ENCODE measurements at regions of chr10 and their contacts with region 1.

Region 1: GRCh38 chr10:121974535-121975294 is at the start of gene NSMCE4A:
- DNase-seq: peak; percentile 62 to 84
- H3K4me3 ChIP-seq: peak within 1 kb of the TSS; percentile 74 to 99
- H3K27ac ChIP-seq: peak within 1 kb of the TSS; percentile 93 to 99
- H3K4me1 ChIP-seq: peaks cover 0 to 24% (median 17%) of the 10 kb centered on the region in 4 donors
- H3K27me3 ChIP-seq: no peaks in the 10 kb centered on the region
- CTCF ChIP-seq: peak in 1 of 2 experiments; percentile 55

Region 2: DNA sequence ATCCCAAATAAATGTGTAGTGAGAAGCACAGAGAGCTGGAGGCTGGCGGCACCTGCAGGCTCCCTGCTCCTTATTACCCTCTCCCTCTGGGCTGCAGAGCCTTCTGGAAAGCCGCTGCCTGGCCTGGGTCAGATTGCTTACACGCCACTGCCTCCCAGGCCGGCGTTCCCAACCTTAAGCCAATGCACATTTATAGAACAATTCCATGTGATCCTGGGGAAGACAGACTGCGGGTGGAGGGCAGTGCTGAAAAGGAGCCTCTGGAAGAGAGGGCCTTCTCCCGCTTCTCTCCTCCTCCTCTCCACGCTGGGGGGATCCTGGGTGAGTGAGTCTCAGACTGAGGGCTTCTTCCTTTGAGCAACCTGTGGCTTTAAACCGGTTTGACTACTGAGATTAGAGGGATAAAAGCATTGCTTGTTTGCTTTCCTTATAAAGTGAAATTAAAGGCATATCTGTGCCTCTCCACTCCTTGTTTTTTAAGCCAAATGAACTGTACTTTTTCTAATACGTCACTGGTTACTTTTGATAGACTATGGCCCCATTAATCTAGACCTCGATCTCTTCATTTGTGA is 19.8 kb after region 1 on chr10:
- intact Hi-C with region 1: loop called (anchors 1 kb)
- DNase-seq: peak; percentile 74 to 89
- H3K4me3 ChIP-seq: peak overlapping the region; percentile 28 to 42
- H3K27ac ChIP-seq: peak overlapping the region; percentile 86 to 87
- H3K4me1 ChIP-seq: peaks cover 0 to 56% (median 31%) of the 10 kb centered on the region in 4 donors
- H3K27me3 ChIP-seq: no peaks in the 10 kb centered on the region
- CTCF ChIP-seq: peak in 1 of 2 experiments; percentile 20

Region 3: GRCh38 chr10:122051251-122051996 is 76.7 kb after region 1 on chr10:
- intact Hi-C with region 1: loop called (anchors 2 kb)
- DNase-seq: peak; percentile 60 to 83
- H3K4me3 ChIP-seq: no peak overlapping the region
- H3K27ac ChIP-seq: peak overlapping the region; percentile 45 to 49
- H3K4me1 ChIP-seq: peaks cover 0 to 20% (median 8%) of the 10 kb centered on the region in 4 donors
- H3K27me3 ChIP-seq: no peaks in the 10 kb centered on the region
- CTCF ChIP-seq: peak; percentile 58 to 72

Region 4: DNA sequence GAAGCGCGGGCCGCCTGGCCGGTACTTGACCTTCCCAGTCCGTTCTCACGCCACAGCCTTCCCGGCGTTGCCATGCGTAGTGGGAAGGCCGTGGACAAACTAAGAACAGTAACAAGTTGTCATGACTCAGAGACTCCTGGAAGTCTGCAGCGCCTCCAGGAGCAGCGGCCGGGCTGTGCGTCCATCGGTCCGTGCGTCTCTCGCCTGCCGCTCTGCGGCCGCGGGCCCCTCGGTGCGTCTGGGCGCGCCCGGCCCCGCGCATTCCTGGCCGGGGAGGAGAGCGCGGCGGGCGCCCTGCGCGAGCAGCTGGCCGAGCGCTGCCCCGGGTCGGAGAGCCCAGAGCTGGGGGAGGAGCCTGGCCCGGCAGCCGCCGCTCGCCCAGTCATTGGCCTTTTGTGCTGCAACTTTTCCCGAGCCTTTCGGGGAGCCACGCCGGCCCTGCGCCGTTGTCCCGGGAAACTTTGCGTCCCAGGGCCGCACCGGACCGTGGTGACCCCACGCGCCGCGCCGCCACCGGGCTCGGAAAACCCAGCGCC is 138.0 kb after region 1 on chr10:
- intact Hi-C with region 1: loop called (anchors 10 kb)
- DNase-seq: peak; percentile 85 to 96
- H3K4me3 ChIP-seq: peak overlapping the region; percentile 61 to 83
- H3K27ac ChIP-seq: peak overlapping the region; percentile 99 to 100
- H3K4me1 ChIP-seq: peaks cover 0 to 39% (median 18%) of the 10 kb centered on the region in 4 donors
- H3K27me3 ChIP-seq: no peaks in the 10 kb centered on the region
- CTCF ChIP-seq: peak; percentile 64 to 68

Region 5: GRCh38 chr10:123548770-123549169 is 1574.1 kb after region 1 on chr10:
- intact Hi-C with region 1: no loop called
- DNase-seq: no peak
- H3K4me3 ChIP-seq: no peak overlapping the region
- H3K27ac ChIP-seq: no peak overlapping the region
- H3K4me1 ChIP-seq: no peaks in the 10 kb centered on the region
- H3K27me3 ChIP-seq: peaks cover 0 to 23% of the 10 kb centered on the region in 2 donors
- CTCF ChIP-seq: no peak